ENCODE measurements at regions of chr10 and their contacts with region 1.

Region 1: DNA sequence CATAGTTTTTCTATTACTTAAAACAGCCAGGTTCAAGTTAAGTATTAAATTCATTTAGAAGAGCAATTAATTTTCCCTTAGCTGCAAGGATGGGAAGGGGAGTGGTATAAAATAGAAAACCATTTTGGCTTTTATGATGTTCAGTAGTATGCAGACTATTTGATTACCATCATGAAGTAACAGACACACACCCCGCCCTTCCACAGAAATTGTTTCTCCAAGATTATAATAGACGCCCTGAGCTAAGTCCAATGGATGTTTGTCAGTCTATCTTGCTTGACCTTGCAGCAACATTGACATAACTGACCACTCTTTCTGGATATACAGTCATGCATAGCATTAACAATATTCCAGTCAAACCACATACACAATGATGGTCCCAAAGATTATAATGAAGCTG is 42.3 kb downstream of the CPEB3 start:
- DNase-seq: no peak
- ATAC-seq: no peak
- H3K4me3 ChIP-seq: no peak overlapping the region
- H3K27ac ChIP-seq: no peak overlapping the region
- H3K4me1 ChIP-seq: peaks cover 5% of the 10 kb centered on the region
- H3K27me3 ChIP-seq: no peaks in the 10 kb centered on the region
- CTCF ChIP-seq: no peak

Region 2: DNA sequence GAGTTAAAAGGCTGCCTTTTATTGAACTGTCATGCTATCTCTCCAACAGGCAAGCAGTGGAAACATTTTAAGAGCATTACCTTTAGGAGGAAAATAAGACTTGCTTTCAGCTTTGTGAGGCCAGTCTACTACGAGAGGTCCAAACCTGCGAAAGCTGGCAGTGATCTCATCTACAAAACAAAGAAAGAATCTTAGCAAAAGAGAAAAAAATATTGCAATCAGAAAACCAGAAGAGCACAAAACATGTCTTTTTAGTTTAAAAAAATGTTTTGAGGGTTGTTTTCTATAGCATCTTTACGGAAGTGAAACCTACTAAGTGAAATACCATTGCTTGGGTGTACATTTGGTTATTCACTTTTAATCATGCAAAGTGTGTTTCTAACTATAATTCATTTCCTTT is 105.6 kb before region 1 on chr10:
- intact Hi-C with region 1: no loop called
- DNase-seq: no peak
- ATAC-seq: no peak
- H3K4me3 ChIP-seq: no peak overlapping the region
- H3K27ac ChIP-seq: no peak overlapping the region
- H3K4me1 ChIP-seq: peaks cover 29% of the 10 kb centered on the region
- H3K27me3 ChIP-seq: no peaks in the 10 kb centered on the region
- CTCF ChIP-seq: no peak

Region 3: DNA sequence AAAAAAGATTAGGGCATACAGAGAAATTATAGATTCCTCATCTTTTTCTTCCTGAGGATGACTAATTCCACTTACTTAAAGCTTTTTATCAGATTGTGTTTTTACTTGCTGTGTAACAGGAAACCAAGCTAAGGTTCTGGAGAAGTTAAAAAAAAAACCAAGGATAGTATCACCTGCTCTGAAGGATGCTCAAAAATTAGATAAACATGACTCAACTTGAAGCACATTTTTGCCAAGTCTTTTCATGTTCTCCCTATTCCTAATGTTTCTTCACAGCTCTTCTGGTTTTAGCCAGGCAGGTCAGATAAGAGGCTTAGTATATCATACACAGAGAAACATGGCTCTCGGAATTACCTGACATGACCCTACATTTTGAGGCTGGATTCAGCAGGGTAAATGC is 48.0 kb before region 1 on chr10:
- intact Hi-C with region 1: no loop called
- DNase-seq: no peak
- ATAC-seq: no peak
- H3K4me3 ChIP-seq: no peak overlapping the region
- H3K27ac ChIP-seq: no peak overlapping the region
- H3K4me1 ChIP-seq: peaks cover 9% of the 10 kb centered on the region
- H3K27me3 ChIP-seq: no peaks in the 10 kb centered on the region
- CTCF ChIP-seq: no peak

Region 4: DNA sequence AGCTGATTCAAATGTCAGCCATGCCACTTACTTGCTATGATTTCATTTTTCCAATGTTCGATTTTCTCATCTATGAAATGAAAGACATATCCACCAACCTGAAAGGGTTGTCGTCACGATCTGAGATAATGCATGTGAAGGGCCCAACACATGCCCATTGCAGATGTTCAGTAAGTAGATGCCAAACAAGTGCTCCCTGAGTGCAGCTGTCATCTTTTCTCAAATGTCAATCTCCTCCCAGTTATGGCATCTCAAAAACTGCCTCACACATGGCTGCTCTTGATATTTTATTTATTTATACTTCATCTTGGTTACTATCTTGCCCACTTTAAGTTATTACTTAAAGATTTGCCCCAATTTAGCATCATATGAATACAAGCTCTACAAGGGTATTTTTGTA is 25.5 kb after region 1 on chr10:
- intact Hi-C with region 1: loop called in 1 of 2 experiments (anchors 2 kb)
- DNase-seq: no peak
- ATAC-seq: no peak
- H3K4me3 ChIP-seq: no peak overlapping the region
- H3K27ac ChIP-seq: no peak overlapping the region
- H3K4me1 ChIP-seq: peaks cover 3% of the 10 kb centered on the region
- H3K27me3 ChIP-seq: no peaks in the 10 kb centered on the region
- CTCF ChIP-seq: no peak

Measured in psoas muscle (tissue), 8 donors.